Heart left ventricle (tissue), 16 donors: ENCODE measurements at regions of chr21 and their contacts with region 1.

Region 1: DNA sequence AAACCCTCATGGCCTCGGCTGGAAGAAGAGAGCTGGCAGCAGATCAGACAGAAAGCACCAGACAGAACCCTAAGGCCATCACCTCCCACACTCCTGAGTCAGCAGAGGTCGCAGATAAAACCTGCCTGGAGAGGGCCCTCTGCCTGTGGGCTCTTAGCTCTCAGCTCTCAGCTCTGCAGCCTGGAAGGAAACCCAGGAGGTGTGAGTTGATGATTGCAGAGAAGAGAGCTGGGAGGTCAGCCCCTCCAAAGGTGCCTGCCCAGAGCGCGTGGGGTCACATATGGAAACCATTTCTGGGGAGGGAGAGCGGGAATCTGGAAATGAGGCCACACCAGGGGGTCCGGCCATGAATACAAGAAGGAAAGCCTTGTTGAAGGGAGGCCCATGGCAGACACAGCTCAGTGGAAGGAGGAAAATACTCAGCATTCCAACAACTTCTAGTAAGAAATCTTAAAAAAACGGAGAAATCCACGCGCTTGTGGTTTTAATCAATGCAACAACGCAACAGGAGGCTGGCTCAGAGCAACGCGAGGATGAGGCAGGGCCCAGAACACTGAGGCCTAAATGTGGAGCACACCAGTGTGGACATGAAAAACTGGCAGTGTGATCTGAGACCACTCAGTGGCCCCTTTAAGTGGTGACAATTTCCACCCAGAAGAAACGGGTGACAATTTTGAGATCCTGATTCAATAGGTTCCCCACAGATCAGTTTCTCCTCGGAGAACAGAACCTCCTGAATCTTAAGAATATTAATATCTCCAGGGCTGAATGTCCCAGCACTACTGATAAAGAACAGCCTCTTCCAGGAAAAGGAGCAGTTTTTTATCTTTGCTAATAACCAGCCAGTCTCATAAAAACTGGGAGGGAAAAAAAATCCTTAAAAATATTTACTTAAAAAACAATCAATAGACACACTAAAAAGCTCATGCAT is 45.7 kb downstream of the PSMG1 start:
- DNase-seq: no peak
- ATAC-seq: peak in 1 of 4 donors; percentile 26
- H3K4me3 ChIP-seq: no peak overlapping the region
- H3K27ac ChIP-seq: peak overlapping the region in 4 of 12 donors; percentile 11 to 39 (median 32)
- H3K4me1 ChIP-seq: peaks cover 0 to 11% (median 0%) of the 10 kb centered on the region in 12 donors
- H3K27me3 ChIP-seq: no peaks in the 10 kb centered on the region
- CTCF ChIP-seq: no peak
- POLR2A ChIP-seq: no peak

Region 2: GRCh38 chr21:38505654-38506515 is 631.6 kb before region 1 on chr21:
- intact Hi-C with region 1: loop called in 9 of 10 experiments (anchors 1 to 10 kb)
- DNase-seq: peak in 1 of 5 donors; percentile 52
- ATAC-seq: peak; percentile 83 to 92 (median 84)
- H3K4me3 ChIP-seq: peak overlapping the region in 4 of 12 donors; percentile 1 to 39 (median 12)
- H3K27ac ChIP-seq: no peak overlapping the region
- H3K4me1 ChIP-seq: peaks cover 0 to 28% (median 6%) of the 10 kb centered on the region in 12 donors
- H3K27me3 ChIP-seq: no peaks in the 10 kb centered on the region
- CTCF ChIP-seq: peak; percentile 57 to 87 (median 73)
- POLR2A ChIP-seq: no peak

Region 3: GRCh38 chr21:38669176-38669575 is 468.3 kb before region 1 on chr21:
- intact Hi-C with region 1: loop called in 3 of 10 experiments (anchors 5 to 10 kb)
- DNase-seq: no peak
- ATAC-seq: peak in 1 of 4 donors; percentile 42
- H3K4me3 ChIP-seq: no peak overlapping the region
- H3K27ac ChIP-seq: no peak overlapping the region
- H3K4me1 ChIP-seq: peaks cover 0 to 8% (median 0%) of the 10 kb centered on the region in 12 donors
- H3K27me3 ChIP-seq: peaks cover 0 to 22% (median 0%) of the 10 kb centered on the region in 9 donors
- CTCF ChIP-seq: peak; percentile 13 to 59 (median 37)
- POLR2A ChIP-seq: no peak